ENCODE measurements at regions of chr5 and their contacts with region 1.

Region 1: GRCh38 chr5:126875303-126875785 is 98.4 kb downstream of the LMNB1 start:
- DNase-seq: no peak

Region 2: DNA sequence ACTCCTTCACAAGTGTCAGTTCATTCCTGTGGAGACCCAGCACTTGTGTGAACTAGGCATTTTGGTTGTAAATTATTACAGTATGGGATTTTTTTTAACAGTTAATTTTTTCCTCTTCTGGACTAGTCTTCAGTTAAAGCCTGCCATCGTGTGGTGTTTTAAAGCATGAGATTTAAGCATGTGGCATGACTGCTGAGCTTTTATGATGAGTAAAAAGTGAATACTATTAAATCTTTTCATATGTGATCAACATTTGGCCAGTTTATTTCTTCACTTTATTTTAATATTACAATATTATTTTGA is 73.4 kb before region 1 on chr5:
- intact Hi-C with region 1: no loop called
- DNase-seq: no peak

Region 3: DNA sequence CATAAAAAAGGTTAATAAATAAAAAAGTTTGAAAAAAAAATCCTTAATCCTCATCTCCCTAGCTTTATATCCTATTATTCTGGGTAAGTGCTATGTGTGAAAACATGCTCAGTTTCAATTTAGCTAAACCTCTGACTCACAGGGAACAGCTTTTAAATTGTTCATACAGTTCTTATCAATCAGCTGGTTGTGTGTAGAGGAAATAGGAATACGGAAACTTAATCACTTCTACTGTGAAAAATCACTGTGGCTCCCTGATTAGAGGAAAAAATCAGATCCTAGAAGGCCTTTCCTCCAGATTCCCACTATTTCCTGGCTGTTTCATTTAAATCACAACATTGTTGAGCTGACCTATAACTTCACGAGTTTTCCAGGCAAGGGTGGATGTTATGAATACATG is 34.5 kb after region 1 on chr5:
- intact Hi-C with region 1: loop called in 1 of 2 experiments (anchors 1 kb)
- DNase-seq: no peak

Region 4: GRCh38 chr5:126920291-126920690 is 44.9 kb after region 1 on chr5:
- intact Hi-C with region 1: no loop called
- DNase-seq: no peak

Measured in posterior vena cava (tissue), 2 donors.